ENCODE measurements at regions of chr11 and their contacts with region 1.

Region 1: GRCh38 chr11:64854534-64855429 is 10.3 kb upstream of the CDC42BPG start:
- DNase-seq: peak; percentile 97
- H3K4me3 Mint-ChIP-seq: peak overlapping the region; percentile 52
- H3K27ac Mint-ChIP-seq: peak overlapping the region; percentile 84
- H3K4me1 Mint-ChIP-seq: peaks cover 53% of the 10 kb centered on the region
- H3K27me3 Mint-ChIP-seq: no peaks in the 10 kb centered on the region
- CTCF ChIP-seq: no peak

Region 2: DNA sequence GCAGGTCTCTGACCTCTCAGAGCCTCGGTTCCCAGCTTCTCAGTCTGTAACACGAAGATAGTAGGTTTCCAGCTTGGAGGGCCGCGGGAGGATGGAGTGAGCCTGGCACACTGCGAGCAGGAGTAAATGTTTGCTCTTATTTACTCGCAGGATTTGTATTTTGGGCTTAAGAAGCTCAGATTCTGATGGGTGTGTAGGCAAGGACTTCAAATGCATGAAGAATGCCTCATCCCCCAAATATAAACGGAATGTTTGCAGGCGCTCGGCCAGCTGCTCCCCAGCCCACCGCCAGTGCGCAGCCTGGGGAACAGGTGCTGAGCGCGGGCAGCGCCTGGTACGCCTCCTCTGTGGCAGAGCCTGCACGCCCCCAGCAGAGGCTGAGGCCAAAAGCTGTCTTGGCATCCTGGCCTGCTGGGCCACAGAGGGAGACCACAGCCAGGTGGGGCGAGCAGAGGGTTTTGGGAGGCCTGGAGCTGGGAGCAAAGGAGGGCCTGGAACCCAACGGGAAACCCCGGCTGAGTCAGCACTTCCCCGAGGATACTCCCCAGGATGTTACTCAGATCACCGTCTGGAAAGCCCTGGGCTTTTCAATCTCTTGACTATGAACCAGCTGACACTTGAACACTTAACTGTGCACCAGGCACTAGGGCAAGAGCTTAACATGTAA is 14.3 kb after region 1 on chr11:
- CTCF ChIA-PET with region 1: interaction called, 15 read pairs
- intact Hi-C with region 1: no loop called
- DNase-seq: peak; percentile 40
- H3K4me3 Mint-ChIP-seq: peak overlapping the region; percentile 15
- H3K27ac Mint-ChIP-seq: no peak overlapping the region
- H3K4me1 Mint-ChIP-seq: peaks cover 67% of the 10 kb centered on the region
- H3K27me3 Mint-ChIP-seq: no peaks in the 10 kb centered on the region
- CTCF ChIP-seq: no peak

Region 3: DNA sequence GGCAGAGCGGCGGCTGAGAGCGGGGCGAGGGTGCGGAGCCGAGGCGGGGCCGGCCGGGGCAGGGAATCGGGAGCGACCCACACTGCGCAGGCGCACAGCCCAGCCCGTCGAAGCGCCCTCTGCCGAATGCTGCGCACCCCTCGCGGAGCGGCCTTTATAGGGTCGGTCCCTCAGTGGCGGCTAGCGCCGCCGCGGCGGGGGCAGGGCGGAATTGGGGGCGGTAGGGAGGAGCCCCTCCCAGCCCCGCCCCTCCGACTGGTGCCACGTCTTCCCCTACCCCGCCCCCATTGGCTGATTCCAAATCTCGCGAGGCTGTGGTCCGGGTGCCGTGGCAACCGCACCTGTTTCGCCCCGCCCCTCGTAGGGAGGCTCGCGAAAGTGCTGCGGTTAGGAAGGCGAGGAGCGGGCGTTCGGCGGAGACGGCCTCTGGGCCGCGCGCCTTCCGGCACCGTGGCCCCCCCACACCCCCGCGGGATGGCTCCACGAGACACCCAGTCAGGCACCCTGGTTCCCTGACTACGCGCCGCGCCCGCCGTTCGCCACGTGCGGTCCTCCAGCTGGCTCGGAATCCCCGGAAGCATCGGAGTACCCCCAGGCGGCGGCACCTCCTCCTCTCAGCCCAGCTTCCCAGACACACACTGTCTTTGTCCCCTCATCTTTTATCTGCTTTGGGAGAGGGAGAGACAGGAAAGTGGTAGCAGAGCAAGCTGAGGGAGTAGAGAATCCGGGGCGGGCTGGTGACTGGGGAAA is 23.9 kb after region 1 on chr11 and contains the start of gene EHD1:
- CTCF ChIA-PET with region 1: interaction called, 13 read pairs
- intact Hi-C with region 1: no loop called
- DNase-seq: peak; percentile 99
- H3K4me3 Mint-ChIP-seq: peak within 1 kb of the TSS; percentile 98
- H3K27ac Mint-ChIP-seq: peak within 1 kb of the TSS; percentile 93
- H3K4me1 Mint-ChIP-seq: peaks cover 28% of the 10 kb centered on the region
- H3K27me3 Mint-ChIP-seq: no peaks in the 10 kb centered on the region
- CTCF ChIP-seq: peak; percentile 7
- total RNA-seq, gene EHD1: 92.8 and 101 TPM in 2 replicates

Region 4: GRCh38 chr11:64887757-64888405 is 33.1 kb after region 1 on chr11:
- CTCF ChIA-PET with region 1: interaction called, 49 read pairs
- intact Hi-C with region 1: no loop called
- DNase-seq: peak; percentile 91
- H3K4me3 Mint-ChIP-seq: peak overlapping the region; percentile 63
- H3K27ac Mint-ChIP-seq: peak overlapping the region; percentile 77
- H3K4me1 Mint-ChIP-seq: peaks cover 65% of the 10 kb centered on the region
- H3K27me3 Mint-ChIP-seq: no peaks in the 10 kb centered on the region
- CTCF ChIP-seq: peak; percentile 98

Region 5: GRCh38 chr11:64894070-64894796 is 39.5 kb after region 1 on chr11:
- CTCF ChIA-PET with region 1: interaction called, 49 read pairs
- intact Hi-C with region 1: loop called (anchors 2 kb)
- DNase-seq: peak; percentile 93
- H3K4me3 Mint-ChIP-seq: peak overlapping the region; percentile 7
- H3K27ac Mint-ChIP-seq: no peak overlapping the region
- H3K4me1 Mint-ChIP-seq: peaks cover 32% of the 10 kb centered on the region
- H3K27me3 Mint-ChIP-seq: no peaks in the 10 kb centered on the region
- CTCF ChIP-seq: peak; percentile 87

Measured in Calu3 (cell line).